HEK293T (cell line): ENCODE measurements at regions of chr9 and their contacts with region 1.

Region 1: GRCh38 chr9:120559546-120559945 is 20.4 kb downstream of the CDK5RAP2 start:
- DNase-seq: no peak

Region 2: GRCh38 chr9:121140162-121140561 is 580.6 kb after region 1 on chr9:
- CTCF ChIA-PET with region 1: interaction called, 10 read pairs
- POLR2A ChIA-PET with region 1: no interaction called
- DNase-seq: no peak